Activated CD8-positive, alpha-beta T cell treated with anti-CD3 and anti-CD28 coated beads for 36 hours (primary cell): ENCODE measurements at regions of chr12 and their contacts with region 1.

Region 1: DNA sequence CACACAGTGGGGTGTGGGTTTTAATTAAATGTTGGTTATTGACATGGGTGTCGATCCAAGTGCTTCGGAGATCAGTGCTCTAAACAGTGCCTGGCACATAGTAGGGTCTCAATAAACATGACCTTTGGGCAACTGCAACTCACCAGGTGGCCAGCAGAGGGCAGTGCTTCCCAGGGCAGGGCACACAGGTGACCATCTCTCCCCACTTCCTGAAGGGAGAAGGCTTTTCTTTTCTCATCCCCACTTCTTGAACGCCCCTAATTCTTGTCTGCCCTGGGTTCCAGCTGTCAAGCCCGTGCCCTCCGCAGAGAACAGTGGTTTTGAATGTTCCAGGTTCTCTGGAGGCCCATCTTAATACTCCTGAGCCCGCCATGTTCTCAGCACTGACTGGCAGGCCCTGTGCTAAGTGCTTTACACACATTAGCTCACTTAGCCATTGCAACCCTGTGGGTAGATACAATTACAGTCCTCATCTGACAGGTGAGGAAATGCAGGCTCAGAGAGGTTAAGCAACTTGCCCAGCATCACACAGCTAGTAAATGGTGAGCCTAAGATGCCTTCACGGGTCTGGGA is 16.3 kb downstream of the RAPGEF3 start:
- DNase-seq: peak; percentile 84
- ATAC-seq: peak; percentile 67
- H3K4me3 Mint-ChIP-seq: no peak overlapping the region
- H3K27ac Mint-ChIP-seq: no peak overlapping the region
- H3K4me1 Mint-ChIP-seq: peaks cover 26% of the 10 kb centered on the region
- H3K27me3 Mint-ChIP-seq: no peaks in the 10 kb centered on the region
- CTCF ChIP-seq: peak; percentile 100

Region 2: DNA sequence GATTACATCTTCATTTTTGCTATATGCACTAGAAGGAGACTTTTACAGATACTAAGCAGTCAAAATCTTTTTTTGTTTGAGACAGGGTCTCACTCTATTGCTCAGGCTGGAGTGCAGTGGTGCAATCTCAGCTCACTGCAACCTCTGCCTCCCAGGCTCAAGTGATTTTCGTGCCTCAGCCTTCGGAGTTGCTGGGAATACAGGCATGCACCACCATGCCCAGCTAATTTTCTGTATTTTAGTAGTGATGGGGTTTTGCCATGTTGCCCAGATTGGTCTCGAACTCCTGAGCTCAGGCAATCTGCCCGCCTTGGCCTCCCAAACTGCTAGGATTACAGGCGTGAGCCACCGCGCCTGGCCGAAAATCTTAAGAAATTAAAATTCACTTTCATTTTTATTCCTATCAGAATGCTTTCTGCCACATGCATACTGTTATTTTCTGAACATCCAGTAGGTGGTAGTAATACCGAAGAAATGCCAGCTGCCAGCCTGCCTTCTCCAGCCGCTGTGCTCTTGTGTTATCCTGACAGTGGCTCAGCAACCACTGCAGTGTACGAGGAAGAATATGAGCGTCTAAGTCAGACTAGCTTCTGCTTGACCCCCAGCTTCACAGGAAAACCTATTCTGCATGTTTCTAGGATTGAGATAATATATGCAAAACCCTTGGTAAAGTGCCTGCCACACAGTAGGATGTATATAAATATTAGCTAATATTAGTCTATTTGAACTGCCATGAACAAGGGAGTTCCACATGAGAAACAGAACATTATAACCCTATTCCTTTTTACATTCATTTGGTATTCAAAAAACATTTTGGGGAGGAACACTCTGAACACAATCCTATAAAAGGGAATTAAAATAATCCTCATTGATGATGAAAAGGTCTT is 90.7 kb before region 1 on chr12:
- CTCF ChIA-PET with region 1: interaction called, 19 read pairs
- POLR2A ChIA-PET with region 1: no interaction called
- intact Hi-C with region 1: no loop called
- DNase-seq: peak; percentile 62
- ATAC-seq: peak; percentile 98
- H3K4me3 Mint-ChIP-seq: no peak overlapping the region
- H3K27ac Mint-ChIP-seq: no peak overlapping the region
- H3K4me1 Mint-ChIP-seq: peaks cover 12% of the 10 kb centered on the region
- H3K27me3 Mint-ChIP-seq: no peaks in the 10 kb centered on the region
- CTCF ChIP-seq: peak; percentile 81

Region 3: DNA sequence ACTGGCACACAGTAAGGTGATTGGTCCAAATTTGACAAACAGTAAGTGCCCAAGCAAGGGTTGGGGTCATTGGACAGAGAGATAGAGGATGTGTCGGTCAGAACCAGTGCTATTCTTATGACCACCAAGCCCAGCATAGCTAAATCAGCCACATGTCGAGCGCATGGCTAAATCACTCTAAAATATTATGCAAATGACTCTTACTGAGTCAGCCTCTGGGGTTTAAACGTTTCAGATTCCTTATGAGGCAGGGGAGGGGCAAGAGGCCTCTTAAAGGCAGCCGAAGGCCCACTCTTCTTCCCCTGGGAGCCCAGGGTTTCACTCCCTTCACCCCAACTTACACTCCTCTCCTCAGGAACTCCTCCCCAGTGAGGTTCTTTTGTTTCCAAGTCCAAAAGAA is 16.4 kb before region 1 on chr12:
- CTCF ChIA-PET with region 1: interaction called, 92 read pairs
- POLR2A ChIA-PET with region 1: interaction called, 6 read pairs
- intact Hi-C with region 1: no loop called
- DNase-seq: no peak
- ATAC-seq: no peak
- H3K4me3 Mint-ChIP-seq: no peak overlapping the region
- H3K27ac Mint-ChIP-seq: no peak overlapping the region
- H3K4me1 Mint-ChIP-seq: peaks cover 19% of the 10 kb centered on the region
- H3K27me3 Mint-ChIP-seq: no peaks in the 10 kb centered on the region
- CTCF ChIP-seq: no peak

Region 4: DNA sequence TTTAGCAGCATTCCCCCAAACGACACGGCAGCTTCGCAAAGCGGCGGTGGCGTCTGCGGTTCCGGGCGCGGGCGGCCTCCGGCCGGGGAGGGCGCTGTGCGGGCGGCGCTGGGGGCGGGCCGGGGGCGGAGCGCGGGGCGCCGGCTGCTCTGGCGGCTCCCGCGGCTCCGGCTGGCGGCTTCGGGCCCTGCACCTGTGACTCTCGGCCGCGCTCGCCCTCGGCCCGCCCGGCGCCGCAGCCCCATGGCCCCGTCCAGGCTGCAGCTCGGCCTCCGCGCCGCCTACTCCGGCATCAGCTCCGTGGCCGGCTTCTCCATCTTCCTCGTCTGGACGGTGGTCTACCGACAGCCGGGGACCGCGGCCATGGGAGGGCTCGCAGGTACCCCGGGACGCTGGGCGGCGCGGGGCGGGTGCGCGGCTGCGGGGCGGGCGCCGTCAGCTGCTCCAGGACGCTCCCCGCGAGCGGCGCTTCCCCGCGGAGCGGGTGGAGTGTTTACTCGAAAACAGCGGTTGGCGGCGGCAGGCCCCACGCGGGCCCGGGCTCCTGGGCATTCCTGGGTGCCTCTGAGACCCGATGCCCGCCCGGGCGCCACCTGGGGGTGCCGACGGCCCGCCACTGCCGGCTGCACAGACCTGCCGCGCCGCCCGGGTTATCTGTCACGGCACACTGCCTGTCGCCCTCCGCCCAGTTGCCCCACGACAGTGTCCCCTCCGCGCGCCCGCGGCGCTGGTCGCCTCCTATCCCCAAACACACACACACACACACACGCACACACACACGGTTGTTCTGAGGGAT is 30.9 kb after region 1 on chr12 and contains the start of gene SLC48A1:
- CTCF ChIA-PET with region 1: interaction called, 685 read pairs
- POLR2A ChIA-PET with region 1: interaction called, 11 read pairs
- intact Hi-C with region 1: no loop called
- DNase-seq: peak; percentile 64
- ATAC-seq: peak; percentile 71
- H3K4me3 Mint-ChIP-seq: peak within 1 kb of the TSS; percentile 87
- H3K27ac Mint-ChIP-seq: peak within 1 kb of the TSS; percentile 52
- H3K4me1 Mint-ChIP-seq: peaks cover 16% of the 10 kb centered on the region
- H3K27me3 Mint-ChIP-seq: no peaks in the 10 kb centered on the region
- CTCF ChIP-seq: no peak
- total RNA-seq, gene SLC48A1: 8.8 to 10.2 TPM

Region 5: GRCh38 chr12:47812797-47813510 is 70.6 kb after region 1 on chr12:
- CTCF ChIA-PET with region 1: interaction called, 37 read pairs
- POLR2A ChIA-PET with region 1: interaction called, 3 read pairs
- intact Hi-C with region 1: no loop called
- DNase-seq: peak; percentile 98
- ATAC-seq: peak; percentile 68
- H3K4me3 Mint-ChIP-seq: peak overlapping the region; percentile 86
- H3K27ac Mint-ChIP-seq: peak overlapping the region; percentile 98
- H3K4me1 Mint-ChIP-seq: peaks cover 63% of the 10 kb centered on the region
- H3K27me3 Mint-ChIP-seq: no peaks in the 10 kb centered on the region
- CTCF ChIP-seq: no peak

Region 6: DNA sequence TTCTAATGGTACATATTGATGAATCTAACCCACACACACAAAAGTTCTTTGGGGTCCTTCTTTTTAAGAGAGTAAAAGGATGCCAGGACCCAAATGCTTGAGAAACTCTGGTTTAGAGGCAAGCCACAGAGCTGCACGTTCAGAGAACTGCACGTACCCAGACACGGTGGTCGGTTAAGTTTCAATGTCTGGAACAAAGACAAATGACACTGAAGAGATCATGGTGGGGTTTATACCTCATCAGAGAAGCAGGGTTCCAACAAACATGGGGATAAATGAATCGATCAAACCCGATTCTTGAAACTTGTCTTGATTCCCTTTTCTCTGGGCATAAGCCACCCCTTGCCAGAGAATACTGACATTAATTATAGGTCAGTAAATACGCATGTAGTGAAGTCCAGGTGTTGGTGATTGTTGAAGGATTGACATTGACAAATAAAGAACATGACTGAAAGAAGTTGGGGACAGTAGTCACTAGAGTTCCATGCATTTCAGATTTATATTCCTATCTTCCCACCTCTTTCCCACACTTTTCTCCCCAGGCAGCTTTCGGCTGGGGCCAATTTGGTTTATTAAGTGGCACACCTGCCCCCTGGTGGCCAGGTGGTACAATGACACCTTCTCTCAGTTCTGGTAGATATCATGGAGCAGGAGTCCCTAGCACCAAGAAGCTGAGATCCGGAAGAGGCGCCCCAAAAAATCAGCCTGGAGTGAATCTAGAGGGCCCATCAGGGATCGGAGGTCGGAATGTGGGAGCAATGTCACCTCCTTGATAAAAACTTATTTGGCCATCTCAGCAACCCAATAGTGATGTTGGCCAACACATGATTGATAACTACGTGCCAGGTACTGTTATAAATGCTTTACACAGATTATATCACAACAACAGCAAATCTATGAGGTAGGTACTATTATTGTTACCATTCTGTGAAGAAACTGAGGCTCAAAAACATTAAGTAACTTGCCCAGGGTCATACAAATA is 95.1 kb after region 1 on chr12:
- CTCF ChIA-PET with region 1: interaction called, 286 read pairs
- POLR2A ChIA-PET with region 1: interaction called, 7 read pairs
- intact Hi-C with region 1: loop called (anchors 5 kb)
- DNase-seq: peak; percentile 77
- ATAC-seq: no peak
- H3K4me3 Mint-ChIP-seq: peak overlapping the region; percentile 31
- H3K27ac Mint-ChIP-seq: peak overlapping the region; percentile 79
- H3K4me1 Mint-ChIP-seq: peaks cover 57% of the 10 kb centered on the region
- H3K27me3 Mint-ChIP-seq: no peaks in the 10 kb centered on the region
- CTCF ChIP-seq: peak; percentile 96

Region 7: DNA sequence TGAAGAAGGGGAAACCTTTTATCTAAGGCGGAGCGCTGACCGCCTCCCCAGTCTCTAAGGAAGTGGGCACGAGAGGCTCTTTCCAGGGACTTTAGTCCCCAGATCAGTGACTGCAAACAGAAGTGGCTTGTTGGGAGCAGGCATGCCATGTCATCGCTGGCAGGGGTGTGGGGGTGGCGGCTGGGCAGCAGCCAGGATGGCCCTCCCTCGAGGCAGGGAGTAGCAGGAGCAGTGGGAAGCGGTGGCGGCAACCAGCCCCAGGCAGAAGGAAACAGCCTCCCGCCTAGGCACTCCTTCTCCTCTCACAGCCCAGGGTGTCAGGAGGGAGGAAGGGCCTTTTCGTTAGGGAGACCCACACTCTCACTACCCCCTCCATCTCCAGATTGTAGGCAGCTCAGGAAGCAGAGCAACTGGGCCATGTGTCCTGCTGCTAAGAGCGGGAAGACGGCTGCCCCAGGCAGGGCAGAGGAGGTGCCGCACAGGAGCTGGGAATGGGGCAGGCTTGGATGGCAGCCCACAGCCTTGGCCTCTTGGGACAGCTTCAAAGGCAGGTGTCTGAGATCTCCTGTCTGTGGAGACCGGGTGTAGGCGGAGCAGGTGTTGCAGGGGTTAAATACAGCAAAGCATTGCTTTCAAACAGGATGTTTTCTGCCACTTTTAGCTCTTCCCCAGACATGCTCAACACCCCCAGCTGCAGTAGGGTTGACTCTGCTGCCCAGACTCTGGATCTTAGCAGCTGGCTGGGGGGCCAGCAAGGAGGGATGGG is 140.6 kb after region 1 on chr12:
- CTCF ChIA-PET with region 1: interaction called, 25 read pairs
- POLR2A ChIA-PET with region 1: no interaction called
- intact Hi-C with region 1: no loop called
- DNase-seq: peak; percentile 78
- ATAC-seq: peak; percentile 17
- H3K4me3 Mint-ChIP-seq: peak overlapping the region; percentile 76
- H3K27ac Mint-ChIP-seq: peak overlapping the region; percentile 96
- H3K4me1 Mint-ChIP-seq: peaks cover 74% of the 10 kb centered on the region
- H3K27me3 Mint-ChIP-seq: no peaks in the 10 kb centered on the region
- CTCF ChIP-seq: no peak